ENCODE measurements at regions of chr19 and their contacts with region 1.

Region 1: GRCh38 chr19:19385108-19385899 is 20.2 kb upstream of the GATAD2A start:
- DNase-seq: peak; percentile 95 to 99 (median 98)
- ATAC-seq: peak; percentile 90 to 93 (median 90)
- H3K4me3 ChIP-seq: peak overlapping the region; percentile 92 to 95
- H3K4me3 Mint-ChIP-seq: peak overlapping the region; percentile 87 to 100 (median 93)
- H3K27ac ChIP-seq: peak overlapping the region; percentile 80
- H3K27ac Mint-ChIP-seq: peak overlapping the region; percentile 84 to 92
- H3K4me1 ChIP-seq: peaks cover 32 to 53% of the 10 kb centered on the region in 2 experiments
- H3K4me1 Mint-ChIP-seq: peaks cover 39 to 42% (median 40%) of the 10 kb centered on the region in 3 donors
- H3K27me3 ChIP-seq: no peaks in the 10 kb centered on the region
- H3K27me3 Mint-ChIP-seq: no peaks in the 10 kb centered on the region

Region 2: DNA sequence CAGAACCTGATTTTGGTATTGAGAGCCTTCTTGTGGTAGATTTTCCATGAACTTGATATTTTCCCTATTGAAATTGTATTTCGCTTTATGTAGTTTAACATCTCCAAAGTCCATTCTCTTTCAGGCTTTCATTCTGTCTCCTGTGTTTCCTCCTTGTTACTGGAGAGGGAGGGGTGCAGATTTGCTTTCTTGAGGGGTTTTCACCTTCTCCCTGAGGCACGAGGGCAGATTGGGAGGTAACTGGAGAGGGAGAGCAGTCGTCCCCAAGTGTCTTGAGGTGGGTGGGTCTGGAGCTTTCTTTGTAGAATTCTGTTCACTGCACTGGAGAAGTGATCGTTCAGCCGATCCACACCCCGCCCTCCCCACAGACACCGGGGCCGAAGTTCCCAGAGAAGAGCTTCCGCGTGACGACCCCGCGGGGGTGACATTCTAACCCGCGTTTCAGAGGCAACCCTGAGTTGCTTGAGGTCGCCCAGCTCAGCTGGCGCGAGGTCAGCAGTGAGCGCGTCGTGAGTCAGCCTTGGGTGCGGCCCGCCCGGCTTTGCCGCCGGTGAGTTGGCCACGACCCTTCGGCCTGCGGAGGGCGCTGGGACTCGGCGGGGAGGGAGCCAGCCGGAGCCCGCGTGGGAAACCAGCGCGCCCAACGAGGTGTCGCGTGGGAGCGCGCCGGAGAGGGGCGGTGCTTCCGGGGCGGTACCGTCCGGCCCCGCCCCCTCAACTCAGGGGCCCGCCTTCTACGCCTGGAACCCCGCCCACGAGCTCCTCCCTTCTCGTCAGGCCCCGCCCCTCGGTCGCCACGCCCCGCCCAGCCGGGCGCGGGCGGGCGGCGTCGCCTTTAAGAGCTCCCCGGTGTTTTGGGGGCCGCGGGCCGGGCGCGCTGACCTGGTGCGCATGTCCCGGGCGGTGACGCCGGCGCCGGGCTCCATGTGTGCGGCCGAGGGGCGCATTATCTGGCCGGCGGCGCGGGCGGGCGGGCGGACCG is 19.9 kb after region 1 on chr19 and contains the start of gene GATAD2A:
- CTCF ChIA-PET with region 1: interaction called in 1 of 2 experiments, 15 read pairs
- POLR2A ChIA-PET with region 1: interaction called in 1 of 2 experiments, 5 read pairs
- DNase-seq: peak; percentile 72 to 95 (median 86)
- ATAC-seq: peak; percentile 79 to 89 (median 83)
- H3K4me3 ChIP-seq: peak within 1 kb of the TSS; percentile 68 to 69
- H3K4me3 Mint-ChIP-seq: peak within 1 kb of the TSS; percentile 95
- H3K27ac ChIP-seq: peak within 1 kb of the TSS; percentile 76
- H3K27ac Mint-ChIP-seq: peak within 1 kb of the TSS; percentile 91 to 95
- H3K4me1 ChIP-seq: peaks cover 13 to 38% of the 10 kb centered on the region in 2 experiments
- H3K4me1 Mint-ChIP-seq: peaks cover 59 to 69% (median 65%) of the 10 kb centered on the region in 3 donors
- H3K27me3 ChIP-seq: no peaks in the 10 kb centered on the region
- H3K27me3 Mint-ChIP-seq: no peaks in the 10 kb centered on the region
- total RNA-seq, gene GATAD2A: 114 to 144 (median 133) TPM

Region 3: DNA sequence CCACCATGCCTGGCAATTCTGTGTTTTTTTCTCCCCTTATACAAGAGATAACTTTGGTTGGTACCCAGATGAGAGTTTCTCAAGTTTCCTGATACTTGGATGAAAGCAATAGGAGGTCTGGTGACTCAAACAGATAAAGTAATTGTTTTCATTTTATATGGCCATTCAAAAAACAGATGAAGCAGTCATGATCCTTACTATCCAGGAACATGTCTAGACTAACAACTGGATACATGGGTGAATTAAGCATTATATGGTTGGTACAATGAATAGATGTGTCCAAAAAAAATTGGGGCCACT is 1643.6 kb after region 1 on chr19:
- CTCF ChIA-PET with region 1: no interaction called
- POLR2A ChIA-PET with region 1: no interaction called
- DNase-seq: no peak
- ATAC-seq: no peak
- H3K4me3 ChIP-seq: no peak overlapping the region
- H3K4me3 Mint-ChIP-seq: peak overlapping the region in 1 of 3 donors; percentile 3
- H3K27ac ChIP-seq: no peak overlapping the region
- H3K27ac Mint-ChIP-seq: peak overlapping the region in 1 of 2 donors; percentile 64
- H3K4me1 ChIP-seq: peaks cover 0 to 17% of the 10 kb centered on the region in 2 experiments
- H3K4me1 Mint-ChIP-seq: peaks cover 68 to 77% (median 76%) of the 10 kb centered on the region in 3 donors
- H3K27me3 ChIP-seq: no peaks in the 10 kb centered on the region
- H3K27me3 Mint-ChIP-seq: no peaks in the 10 kb centered on the region

Measured in T-cell (primary cell).